ENCODE measurements at regions of chr9 and their contacts with region 1.

Region 1: GRCh38 chr9:76658535-76659231 is 105.6 kb upstream of the PCA3 start:
- DNase-seq: peak; percentile 79
- H3K4me3 ChIP-seq: no peak overlapping the region
- H3K27ac ChIP-seq: no peak overlapping the region
- H3K4me1 ChIP-seq: peaks cover 51% of the 10 kb centered on the region
- H3K27me3 ChIP-seq: no peaks in the 10 kb centered on the region
- CTCF ChIP-seq: peak; percentile 37 to 54
- POLR2A ChIP-seq: no peak

Region 2: GRCh38 chr9:76336027-76336426 is 322.7 kb before region 1 on chr9:
- CTCF ChIA-PET with region 1: no interaction called
- POLR2A ChIA-PET with region 1: no interaction called
- dilution Hi-C with region 1: no loop called
- intact Hi-C with region 1: no loop called
- DNase-seq: no peak
- H3K4me3 ChIP-seq: no peak overlapping the region
- H3K27ac ChIP-seq: no peak overlapping the region
- H3K4me1 ChIP-seq: no peaks in the 10 kb centered on the region
- H3K27me3 ChIP-seq: peaks cover 6 to 8% of the 10 kb centered on the region in 2 experiments
- CTCF ChIP-seq: no peak
- POLR2A ChIP-seq: no peak

Region 3: GRCh38 chr9:76403352-76403751 is 255.3 kb before region 1 on chr9:
- CTCF ChIA-PET with region 1: interaction called, 10 read pairs
- POLR2A ChIA-PET with region 1: no interaction called
- dilution Hi-C with region 1: no loop called
- intact Hi-C with region 1: loop called (anchors 1 kb)
- DNase-seq: peak; percentile 83
- H3K4me3 ChIP-seq: no peak overlapping the region
- H3K27ac ChIP-seq: peak overlapping the region; percentile 32
- H3K4me1 ChIP-seq: peaks cover 5% of the 10 kb centered on the region
- H3K27me3 ChIP-seq: no peaks in the 10 kb centered on the region
- CTCF ChIP-seq: peak; percentile 34 to 42
- POLR2A ChIP-seq: no peak

Region 4: GRCh38 chr9:76441551-76442322 is 216.9 kb before region 1 on chr9:
- CTCF ChIA-PET with region 1: interaction called, 67 read pairs
- POLR2A ChIA-PET with region 1: no interaction called
- dilution Hi-C with region 1: no loop called
- intact Hi-C with region 1: no loop called
- DNase-seq: peak; percentile 77
- H3K4me3 ChIP-seq: no peak overlapping the region
- H3K27ac ChIP-seq: peak overlapping the region; percentile 53
- H3K4me1 ChIP-seq: peaks cover 8% of the 10 kb centered on the region
- H3K27me3 ChIP-seq: no peaks in the 10 kb centered on the region
- CTCF ChIP-seq: no peak
- POLR2A ChIP-seq: no peak

Region 5: GRCh38 chr9:76451234-76451633 is 207.4 kb before region 1 on chr9:
- CTCF ChIA-PET with region 1: interaction called, 67 read pairs
- POLR2A ChIA-PET with region 1: no interaction called
- dilution Hi-C with region 1: no loop called
- intact Hi-C with region 1: loop called (anchors 1 kb)
- DNase-seq: no peak
- H3K4me3 ChIP-seq: no peak overlapping the region
- H3K27ac ChIP-seq: no peak overlapping the region
- H3K4me1 ChIP-seq: peaks cover 5% of the 10 kb centered on the region
- H3K27me3 ChIP-seq: no peaks in the 10 kb centered on the region
- CTCF ChIP-seq: no peak
- POLR2A ChIP-seq: no peak

Region 6: DNA sequence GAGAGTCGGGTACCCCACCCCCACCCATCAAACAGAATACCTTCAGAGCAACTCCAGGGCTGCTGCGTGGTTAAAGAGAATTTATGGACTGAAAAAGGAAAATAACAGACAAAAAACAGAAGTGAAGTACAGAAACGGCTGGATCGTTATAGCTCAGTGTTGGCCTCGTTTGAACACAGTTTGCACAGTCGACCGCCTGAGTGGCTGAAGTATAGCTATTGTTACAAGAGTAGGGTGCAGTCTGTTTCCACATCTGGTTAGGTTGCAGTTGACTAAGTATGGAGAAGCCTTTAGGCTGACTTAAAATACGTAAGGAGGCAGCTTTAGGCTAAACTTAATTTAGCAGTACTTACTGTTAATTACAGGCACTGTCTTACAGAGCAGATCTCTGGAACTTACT is 78.5 kb before region 1 on chr9:
- CTCF ChIA-PET with region 1: interaction called, 10 read pairs
- POLR2A ChIA-PET with region 1: no interaction called
- dilution Hi-C with region 1: no loop called
- intact Hi-C with region 1: no loop called
- DNase-seq: no peak
- H3K4me3 ChIP-seq: no peak overlapping the region
- H3K27ac ChIP-seq: no peak overlapping the region
- H3K4me1 ChIP-seq: peaks cover 2% of the 10 kb centered on the region
- H3K27me3 ChIP-seq: no peaks in the 10 kb centered on the region
- CTCF ChIP-seq: no peak
- POLR2A ChIP-seq: no peak

Region 7: DNA sequence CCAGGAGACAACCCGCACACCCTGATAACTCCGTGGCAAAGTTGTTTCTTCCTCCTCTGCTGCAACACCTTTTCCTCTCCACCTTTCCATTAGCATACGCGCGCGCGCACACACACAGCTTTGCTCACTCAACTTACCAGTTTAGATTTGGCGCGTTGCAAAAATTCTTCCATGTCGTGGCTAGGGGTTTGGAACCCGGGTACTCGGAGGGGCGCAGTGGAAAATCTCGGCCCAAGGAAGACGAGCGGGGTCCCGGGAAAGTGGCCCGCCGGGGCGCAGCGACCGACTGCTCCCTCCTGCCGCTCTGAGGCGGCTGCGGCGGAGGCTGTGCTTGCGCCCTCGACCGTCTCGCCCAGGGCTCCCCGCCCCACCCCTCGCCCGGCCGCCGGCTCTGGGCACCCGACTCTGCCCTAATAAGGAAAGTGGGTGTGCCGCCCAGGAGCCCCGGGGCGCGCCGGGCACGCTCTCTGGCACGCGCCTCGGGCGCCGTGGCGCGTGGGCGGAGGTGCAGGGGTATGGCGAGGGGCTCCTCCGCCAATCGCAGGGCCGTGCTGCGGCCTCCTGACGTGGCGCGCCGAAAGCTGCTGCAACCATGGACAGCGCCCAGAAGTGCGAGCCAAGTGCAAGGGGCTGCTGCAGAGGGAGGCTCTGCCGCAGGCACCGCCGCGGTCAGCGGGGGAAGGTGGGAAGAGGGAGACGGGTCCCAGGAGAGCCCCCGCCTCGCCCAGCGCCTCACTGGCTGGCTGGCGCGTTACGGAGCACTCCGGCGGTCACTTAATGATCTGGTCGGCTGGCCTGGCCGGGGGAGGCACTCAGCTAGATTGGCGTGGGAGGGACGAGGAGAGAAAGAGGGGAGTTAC is 247.3 kb after region 1 on chr9 and contains the start of gene PRUNE2:
- CTCF ChIA-PET with region 1: no interaction called
- POLR2A ChIA-PET with region 1: no interaction called
- dilution Hi-C with region 1: no loop called
- intact Hi-C with region 1: no loop called
- DNase-seq: peak; percentile 66
- H3K4me3 ChIP-seq: no peak within 1 kb of the TSS
- H3K27ac ChIP-seq: no peak within 1 kb of the TSS
- H3K4me1 ChIP-seq: no peaks in the 10 kb centered on the region
- H3K27me3 ChIP-seq: peaks cover 23 to 32% of the 10 kb centered on the region in 2 experiments
- CTCF ChIP-seq: no peak
- POLR2A ChIP-seq: no peak
- total RNA-seq, gene PRUNE2: 8.3 and 21.7 TPM in 2 replicates